Prostate gland (tissue), 2 donors: ENCODE measurements at regions of chr7 and their contacts with region 1.

Region 1: DNA sequence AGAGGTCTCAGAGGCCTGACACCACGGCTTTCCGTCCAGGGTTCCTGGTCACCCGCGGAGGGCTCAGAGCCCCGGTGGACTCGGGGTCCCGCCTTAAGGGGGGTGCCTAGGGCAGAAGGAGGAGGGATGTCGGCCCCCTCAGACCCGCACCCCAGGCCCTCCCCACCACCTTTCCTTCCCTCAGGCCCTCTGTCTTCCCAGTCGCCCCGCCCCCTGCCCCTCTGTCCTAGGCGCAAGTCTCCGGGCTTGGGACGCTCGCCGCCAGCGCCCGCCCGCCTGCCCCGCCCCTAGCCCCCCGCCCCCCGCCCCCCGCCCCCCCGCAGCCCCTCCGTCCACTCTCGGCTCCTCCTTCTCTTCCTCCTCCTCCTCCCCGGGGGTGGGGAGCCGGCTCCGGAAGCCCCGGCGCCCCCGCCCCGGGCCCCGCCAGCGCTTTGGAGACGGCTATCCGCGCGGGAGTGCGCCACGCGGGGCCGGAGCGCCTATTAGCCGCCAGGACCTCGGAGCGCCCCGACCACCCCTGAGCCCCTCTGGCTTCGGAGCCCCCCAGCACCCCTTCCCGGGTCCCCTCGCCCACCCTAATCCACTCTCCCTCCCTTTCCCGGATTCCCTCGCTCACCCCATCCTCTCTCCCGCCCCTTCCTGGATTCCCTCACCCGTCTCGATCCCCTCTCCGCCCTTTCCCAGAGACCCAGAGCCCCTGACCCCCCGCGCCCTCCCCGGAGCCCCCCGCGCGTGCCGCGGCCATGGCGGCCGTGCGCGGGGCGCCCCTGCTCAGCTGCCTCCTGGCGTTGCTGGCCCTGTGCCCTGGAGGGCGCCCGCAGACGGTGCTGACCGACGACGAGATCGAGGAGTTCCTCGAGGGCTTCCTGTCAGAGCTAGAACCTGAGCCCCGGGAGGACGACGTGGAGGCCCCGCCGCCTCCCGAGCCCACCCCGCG is at the start of gene AEBP1:
- DNase-seq: no peak
- H3K4me3 ChIP-seq: peak within 1 kb of the TSS; percentile 35 to 37
- H3K27ac ChIP-seq: peak within 1 kb of the TSS; percentile 71 to 79
- H3K4me1 ChIP-seq: no peaks in the 10 kb centered on the region
- H3K27me3 ChIP-seq: no peaks in the 10 kb centered on the region
- CTCF ChIP-seq: no peak
- POLR2A ChIP-seq: no peak
- total RNA-seq, gene AEBP1: 40.4 to 219 TPM

Region 2: GRCh38 chr7:44490351-44491200 is 386.4 kb after region 1 on chr7 and contains the start of gene NUDCD3:
- intact Hi-C with region 1: loop called (anchors 10 kb)
- DNase-seq: peak; percentile 84
- H3K4me3 ChIP-seq: peak within 1 kb of the TSS; percentile 69 to 90
- H3K27ac ChIP-seq: peak within 1 kb of the TSS; percentile 98
- H3K4me1 ChIP-seq: peaks cover 22% of the 10 kb centered on the region
- H3K27me3 ChIP-seq: no peaks in the 10 kb centered on the region
- CTCF ChIP-seq: peak in 2 of 4 experiments; percentile 2 to 9
- POLR2A ChIP-seq: no peak
- total RNA-seq, gene NUDCD3: 55.2 to 55.9 TPM